HEK293T (cell line): ENCODE measurements at regions of chr11 and their contacts with region 1.

Region 1: GRCh38 chr11:75532200-75533048 is 6.7 kb upstream of the GDPD5 start:
- DNase-seq: peak; percentile 80

Region 2: DNA sequence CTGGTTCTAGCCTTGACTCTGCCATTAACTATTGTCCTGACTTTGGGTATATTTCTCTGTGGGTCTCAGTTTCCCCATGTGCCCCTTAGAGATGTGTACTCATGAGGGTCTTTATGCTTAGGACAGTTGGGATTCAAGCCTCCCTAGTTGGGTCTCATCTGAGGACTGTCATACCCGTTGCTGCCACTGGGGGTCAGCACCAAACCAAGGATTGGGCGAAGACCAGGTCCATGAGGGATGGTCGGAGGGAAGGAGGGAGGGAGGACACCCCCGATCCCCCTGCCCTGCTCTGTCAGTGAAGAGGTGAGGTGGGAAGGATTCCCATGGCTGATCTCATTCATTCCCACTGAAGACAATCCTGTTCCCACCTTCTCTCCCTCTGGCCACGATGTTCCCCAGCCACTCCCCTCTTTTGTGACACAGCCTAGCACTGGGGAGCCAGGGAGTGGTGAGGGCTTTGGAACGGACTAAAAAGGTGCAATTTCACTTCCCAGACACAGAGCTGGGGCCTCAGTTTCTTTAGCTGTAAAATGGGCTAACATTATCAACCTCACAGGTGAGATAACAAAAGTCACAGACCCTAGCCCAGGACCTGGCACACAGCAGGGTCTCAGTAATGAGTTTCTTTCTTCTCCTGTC is 87.0 kb before region 1 on chr11:
- CTCF ChIA-PET with region 1: interaction called, 25 read pairs
- POLR2A ChIA-PET with region 1: no interaction called
- DNase-seq: peak; percentile 83